Esophagus muscularis mucosa (tissue), 4 donors: ENCODE measurements at regions of chr17 and their contacts with region 1.

Region 1: GRCh38 chr17:82494236-82495055 is 25.1 kb upstream of the FOXK2 start:
- DNase-seq: peak; percentile 98
- H3K4me3 ChIP-seq: peak overlapping the region in 1 of 4 donors; percentile 13
- H3K27ac ChIP-seq: peak overlapping the region; percentile 86 to 95 (median 95)
- H3K4me1 ChIP-seq: peaks cover 24 to 51% (median 49%) of the 10 kb centered on the region in 4 donors
- H3K27me3 ChIP-seq: no peaks in the 10 kb centered on the region
- CTCF ChIP-seq: peak; percentile 87 to 98 (median 94)
- EP300 ChIP-seq: no peak
- POLR2A ChIP-seq: no peak

Region 2: DNA sequence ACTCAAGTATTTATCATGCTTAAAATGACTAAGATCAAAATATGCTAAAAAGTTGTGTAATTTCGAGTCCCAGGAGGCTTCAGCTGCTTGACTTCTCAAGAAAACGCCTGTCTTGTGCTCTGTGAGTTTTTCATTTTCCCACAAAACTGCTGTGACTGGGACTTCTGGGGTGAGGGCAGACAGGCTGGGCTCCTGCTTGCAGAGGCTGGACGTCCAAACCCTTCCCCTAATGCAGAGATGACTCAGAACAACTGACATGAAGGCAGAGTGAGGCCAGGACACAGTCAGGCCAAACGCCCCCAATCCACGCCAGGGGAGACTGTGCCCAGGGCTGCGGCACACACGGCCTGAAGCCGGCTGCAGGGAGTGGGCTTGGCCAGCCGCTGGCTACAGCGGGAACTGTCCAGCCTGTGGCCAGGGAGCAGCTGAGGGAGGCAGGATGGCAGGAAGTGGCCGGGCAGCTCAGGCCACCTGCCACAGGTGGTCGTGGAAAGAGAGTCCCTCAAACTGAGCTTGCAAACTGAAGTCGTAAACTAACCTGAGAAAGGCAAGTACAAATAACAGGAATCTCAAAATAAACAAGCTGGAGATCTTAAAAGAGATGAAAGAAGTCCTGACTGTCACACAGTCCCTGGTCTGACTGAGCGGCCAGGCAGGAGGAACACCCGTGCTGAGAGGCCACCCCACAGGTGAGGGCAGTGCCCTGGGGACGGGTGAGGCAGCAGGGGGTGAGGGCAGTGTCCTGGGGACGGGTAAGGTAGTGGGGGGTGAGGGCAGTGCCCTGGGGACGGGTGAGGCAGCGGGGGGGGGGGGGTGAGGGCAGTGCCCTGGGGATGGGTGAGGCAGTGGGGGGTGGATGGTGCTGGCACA is 97.6 kb before region 1 on chr17:
- intact Hi-C with region 1: no loop called
- DNase-seq: no peak
- H3K4me3 ChIP-seq: no peak overlapping the region
- H3K27ac ChIP-seq: peak overlapping the region in 1 of 4 donors; percentile 33
- H3K4me1 ChIP-seq: peaks cover 5 to 37% (median 22%) of the 10 kb centered on the region in 4 donors
- H3K27me3 ChIP-seq: no peaks in the 10 kb centered on the region
- CTCF ChIP-seq: no peak
- EP300 ChIP-seq: no peak
- POLR2A ChIP-seq: no peak

Region 3: DNA sequence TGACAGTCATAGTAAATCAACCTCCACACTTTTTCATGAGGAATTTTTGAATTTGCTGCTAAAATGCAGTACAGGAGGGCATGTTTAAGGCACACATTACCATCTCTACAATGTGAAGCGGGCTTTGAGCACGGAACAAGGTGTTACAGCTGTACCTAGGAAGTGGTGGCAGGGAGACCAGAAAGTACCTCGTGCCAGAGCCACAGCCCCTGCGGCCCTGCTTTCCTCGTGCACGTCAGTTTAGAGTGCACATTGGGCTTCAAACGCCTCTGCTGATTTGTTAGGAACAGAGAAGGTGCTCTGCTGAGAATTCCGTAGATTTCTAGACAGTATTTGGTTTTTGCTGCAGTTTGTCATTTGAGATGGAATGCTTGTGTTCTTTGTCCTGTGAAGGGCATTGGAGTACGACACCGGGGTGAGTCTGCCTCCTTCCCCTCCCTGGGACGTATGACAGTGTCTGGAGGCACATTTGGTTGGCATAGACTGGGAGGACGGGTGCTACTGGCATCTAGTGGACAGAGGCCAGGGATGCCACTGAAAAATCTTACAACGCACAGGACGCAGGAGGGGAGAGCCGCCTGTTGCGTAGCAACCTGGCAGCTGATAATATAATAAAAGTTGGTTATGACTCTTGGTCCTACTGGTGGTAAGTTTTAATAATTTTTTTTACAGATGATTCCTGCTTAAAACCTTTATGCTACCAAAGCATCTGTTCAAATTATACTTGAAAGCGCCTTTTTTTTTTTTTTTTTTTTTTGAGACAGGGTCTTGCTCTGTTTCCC is 34.2 kb after region 1 on chr17:
- intact Hi-C with region 1: loop called (anchors 5 kb)
- DNase-seq: no peak
- H3K4me3 ChIP-seq: peak overlapping the region in 1 of 4 donors; percentile 9
- H3K27ac ChIP-seq: peak overlapping the region; percentile 73 to 82 (median 78)
- H3K4me1 ChIP-seq: peaks cover 77 to 98% (median 94%) of the 10 kb centered on the region in 4 donors
- H3K27me3 ChIP-seq: no peaks in the 10 kb centered on the region
- CTCF ChIP-seq: peak; percentile 30 to 50 (median 45)
- EP300 ChIP-seq: no peak
- POLR2A ChIP-seq: no peak

Region 4: GRCh38 chr17:82544431-82545070 is 50.1 kb after region 1 on chr17:
- intact Hi-C with region 1: no loop called
- DNase-seq: no peak
- H3K4me3 ChIP-seq: peak overlapping the region; percentile 2 to 5 (median 4)
- H3K27ac ChIP-seq: peak overlapping the region; percentile 11 to 59 (median 46)
- H3K4me1 ChIP-seq: peaks cover 57 to 79% (median 62%) of the 10 kb centered on the region in 4 donors
- H3K27me3 ChIP-seq: no peaks in the 10 kb centered on the region
- CTCF ChIP-seq: no peak
- EP300 ChIP-seq: no peak
- POLR2A ChIP-seq: no peak